Stomach (tissue), 19 donors: ENCODE measurements at regions of chr1 and their contacts with region 1.

Region 1: DNA sequence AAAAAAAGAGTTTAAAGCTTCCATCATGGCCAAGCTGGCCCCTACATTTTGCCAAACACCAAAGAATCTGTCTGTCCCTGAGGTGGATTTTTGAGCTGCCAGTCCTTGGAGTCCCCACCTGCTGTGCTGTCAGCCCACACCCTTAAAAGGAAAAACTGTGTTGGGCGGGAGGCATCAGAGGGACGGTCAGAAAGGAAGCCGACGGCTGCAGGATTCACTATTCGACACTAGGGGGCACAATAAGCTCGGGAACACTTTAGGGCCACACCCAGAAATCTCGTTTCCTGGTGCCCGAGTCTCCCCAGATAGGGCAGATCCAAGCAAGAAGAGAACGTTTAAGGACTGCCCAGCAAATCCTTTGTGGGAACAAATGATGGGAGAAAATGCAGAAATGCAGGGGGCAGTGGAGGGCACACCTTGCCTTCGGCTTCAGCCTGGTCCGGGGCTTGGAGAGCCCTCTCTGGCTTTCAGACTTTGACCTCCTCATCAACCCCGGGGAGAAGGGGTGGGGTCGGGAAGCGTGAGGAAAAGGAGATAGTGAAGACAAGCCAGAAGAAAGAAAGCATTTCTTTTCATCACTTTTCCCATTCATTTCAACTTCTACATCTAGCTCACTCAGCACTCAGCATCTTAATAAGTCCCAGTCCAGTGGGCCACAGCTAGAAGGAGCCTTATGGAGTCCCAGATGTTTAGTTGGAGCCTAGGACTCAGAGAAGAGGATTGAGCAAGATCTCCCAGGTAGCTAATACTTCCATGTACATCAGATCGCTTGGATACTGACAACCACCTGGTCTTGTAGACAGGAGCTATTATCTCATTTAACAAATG is 5.0 kb upstream of the CTTNBP2NL start:
- DNase-seq: peak; percentile 91 to 96
- H3K4me3 ChIP-seq: peak overlapping the region; percentile 31 to 39 (median 35)
- H3K27ac ChIP-seq: peak overlapping the region; percentile 70 to 88 (median 81)
- H3K4me1 ChIP-seq: peaks cover 13 to 48% (median 30%) of the 10 kb centered on the region in 4 donors
- H3K27me3 ChIP-seq: no peaks in the 10 kb centered on the region
- CTCF ChIP-seq: peak in 6 of 7 experiments; percentile 15 to 96 (median 92)
- EP300 ChIP-seq: no peak
- POLR2A ChIP-seq: no peak

Region 2: GRCh38 chr1:112464501-112464900 is 73.5 kb after region 1 on chr1:
- intact Hi-C with region 1: loop called (anchors 5 kb)
- DNase-seq: peak in 1 of 2 donors; percentile 50
- H3K4me3 ChIP-seq: no peak overlapping the region
- H3K27ac ChIP-seq: peak overlapping the region in 3 of 5 donors; percentile 7 to 81 (median 66)
- H3K4me1 ChIP-seq: peaks cover 3 to 42% (median 19%) of the 10 kb centered on the region in 4 donors
- H3K27me3 ChIP-seq: no peaks in the 10 kb centered on the region
- CTCF ChIP-seq: no peak
- EP300 ChIP-seq: no peak
- POLR2A ChIP-seq: no peak

Region 3: DNA sequence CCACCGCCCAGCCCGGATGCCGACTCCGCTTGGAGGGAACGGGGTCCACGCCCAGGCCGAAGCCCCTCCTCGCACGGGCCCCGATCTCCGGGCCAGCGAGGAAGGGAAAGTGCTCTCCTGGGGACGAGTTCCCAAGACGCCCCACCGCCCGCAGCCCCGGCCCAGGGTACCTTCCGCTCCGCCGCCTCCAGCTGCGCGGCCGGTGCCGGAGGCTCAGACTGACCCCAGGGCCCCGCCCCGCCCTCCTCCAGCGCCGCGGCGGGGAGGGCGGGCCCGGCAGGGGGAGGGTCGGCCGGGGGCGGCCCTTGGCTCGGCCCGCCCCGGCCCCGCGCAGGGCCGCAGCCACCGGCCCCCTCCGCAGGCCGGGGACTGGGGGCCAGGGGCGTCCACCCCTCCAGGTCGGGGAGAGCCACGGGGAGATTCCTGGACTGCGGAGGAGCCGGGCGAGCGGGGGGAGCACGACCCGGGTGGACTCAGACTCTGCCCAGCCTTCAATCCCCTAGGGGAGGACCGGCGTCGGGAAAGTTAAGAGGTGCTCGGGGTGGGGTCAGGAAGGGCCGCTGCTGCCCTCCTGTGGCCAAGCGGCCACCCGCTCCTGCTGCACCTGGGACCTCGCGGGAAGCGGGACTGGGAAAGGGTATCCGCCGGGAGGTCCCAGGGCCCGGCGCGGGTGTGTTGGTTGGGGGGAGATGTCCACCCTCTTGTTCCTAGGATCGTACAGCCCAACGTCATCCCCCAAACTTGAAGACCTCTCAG is 316.1 kb after region 1 on chr1 and contains the start of gene RHOC:
- intact Hi-C with region 1: loop called (anchors 10 kb)
- DNase-seq: peak; percentile 89 to 96
- H3K4me3 ChIP-seq: peak within 1 kb of the TSS; percentile 72 to 95 (median 87)
- H3K27ac ChIP-seq: peak within 1 kb of the TSS; percentile 91 to 98 (median 96)
- H3K4me1 ChIP-seq: peaks cover 39 to 48% (median 47%) of the 10 kb centered on the region in 4 donors
- H3K27me3 ChIP-seq: no peaks in the 10 kb centered on the region
- CTCF ChIP-seq: peak in 5 of 7 experiments; percentile 81 to 92 (median 87)
- EP300 ChIP-seq: no peak
- POLR2A ChIP-seq: no peak
- total RNA-seq, gene RHOC: 99.8 to 149 (median 113) TPM